ENCODE measurements at regions of chr6 and their contacts with region 1.

Region 1: DNA sequence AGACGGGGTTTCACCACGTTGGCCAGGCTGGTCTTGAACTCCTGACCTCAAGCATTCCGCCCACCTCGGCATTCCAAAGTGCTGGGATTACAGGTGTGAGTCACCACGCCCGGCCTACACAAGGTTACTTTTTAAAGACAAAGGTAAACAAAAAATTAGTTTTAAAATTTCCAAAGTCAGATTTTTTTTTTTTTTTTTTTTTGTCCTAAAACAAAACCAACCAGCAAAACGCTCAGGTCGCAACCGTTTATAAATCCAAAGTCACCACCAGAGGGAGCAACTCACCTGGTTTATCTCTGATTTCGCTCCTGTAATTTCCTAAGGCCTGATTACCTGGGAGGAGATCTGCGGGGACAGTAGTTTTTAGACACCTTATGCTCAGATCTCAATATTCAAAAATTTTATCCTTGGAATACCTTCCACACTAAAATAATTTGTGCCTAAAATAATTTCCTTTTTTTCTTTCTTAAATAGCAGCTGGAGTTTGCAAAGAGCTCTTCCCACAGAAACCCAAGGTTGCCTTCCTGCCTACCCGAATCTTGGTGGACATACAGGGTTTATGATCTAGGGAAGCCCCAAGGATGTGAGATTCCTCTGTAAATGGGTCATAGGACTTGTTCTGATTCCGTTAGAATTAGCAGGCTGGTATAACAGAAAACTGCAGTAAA is 19.8 kb upstream of the TREM1 start:
- DNase-seq: peak; percentile 71
- ATAC-seq: peak; percentile 60
- H3K4me3 Mint-ChIP-seq: no peak overlapping the region
- H3K27ac Mint-ChIP-seq: no peak overlapping the region
- H3K4me1 Mint-ChIP-seq: peaks cover 22% of the 10 kb centered on the region
- H3K27me3 Mint-ChIP-seq: peaks cover 40% of the 10 kb centered on the region

Region 2: GRCh38 chr6:41278699-41279405 is 27.5 kb before region 1 on chr6:
- CTCF ChIA-PET with region 1: interaction called, 10 read pairs
- POLR2A ChIA-PET with region 1: no interaction called
- DNase-seq: peak; percentile 82
- ATAC-seq: peak; percentile 89
- H3K4me3 Mint-ChIP-seq: no peak overlapping the region
- H3K27ac Mint-ChIP-seq: no peak overlapping the region
- H3K4me1 Mint-ChIP-seq: peaks cover 14% of the 10 kb centered on the region
- H3K27me3 Mint-ChIP-seq: peaks cover 10% of the 10 kb centered on the region

Measured in activated CD8-positive, alpha-beta T cell treated with anti-CD3 and anti-CD28 coated beads, Interleukin-2, amount 10 ng/mL, durations not matched to agents 7 days and 5 days (primary cell).